Calu3 (cell line): ENCODE measurements at regions of chr12 and their contacts with region 1.

Region 1: DNA sequence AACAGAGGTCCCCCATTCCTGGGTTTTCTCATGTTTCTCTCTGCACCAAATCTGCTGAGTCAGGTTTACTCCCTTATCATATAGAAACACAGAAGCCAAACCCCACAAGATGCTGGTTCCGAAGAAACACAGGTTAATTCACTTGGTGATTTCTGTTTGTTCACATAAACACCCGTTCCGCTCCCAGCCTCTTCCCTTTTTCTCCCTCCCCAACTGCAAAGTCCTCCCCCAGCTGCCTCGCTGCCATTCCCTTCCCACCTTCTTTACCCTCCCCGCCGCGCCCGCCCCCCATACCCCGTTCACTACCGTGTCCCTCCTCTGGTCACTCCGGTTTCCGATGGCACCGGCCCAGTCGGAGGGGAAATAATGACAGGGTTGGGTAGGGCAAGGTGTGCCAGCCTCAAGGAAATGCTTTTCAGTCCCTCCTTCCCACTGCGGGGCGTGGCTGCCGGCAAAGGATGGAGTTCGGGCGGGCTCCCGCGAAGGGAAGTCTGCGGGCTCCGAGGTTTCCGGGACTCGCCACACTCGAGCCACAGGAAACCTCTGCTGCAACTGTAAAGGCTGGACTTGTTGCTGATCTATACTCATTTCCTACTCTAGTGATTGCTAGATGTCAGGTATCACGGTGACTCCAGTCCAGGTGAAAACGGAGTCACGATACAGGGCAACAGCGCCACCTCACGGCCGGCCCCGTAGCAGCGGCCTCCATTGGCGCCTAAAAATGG is at the start of gene STYK1:
- DNase-seq: peak; percentile 91
- H3K4me3 Mint-ChIP-seq: peak within 1 kb of the TSS; percentile 81
- H3K27ac Mint-ChIP-seq: peak within 1 kb of the TSS; percentile 70
- H3K4me1 Mint-ChIP-seq: peaks cover 35% of the 10 kb centered on the region
- H3K27me3 Mint-ChIP-seq: no peaks in the 10 kb centered on the region
- CTCF ChIP-seq: peak; percentile 93
- total RNA-seq, gene STYK1: 8.4 and 10.7 TPM in 2 replicates

Region 2: DNA sequence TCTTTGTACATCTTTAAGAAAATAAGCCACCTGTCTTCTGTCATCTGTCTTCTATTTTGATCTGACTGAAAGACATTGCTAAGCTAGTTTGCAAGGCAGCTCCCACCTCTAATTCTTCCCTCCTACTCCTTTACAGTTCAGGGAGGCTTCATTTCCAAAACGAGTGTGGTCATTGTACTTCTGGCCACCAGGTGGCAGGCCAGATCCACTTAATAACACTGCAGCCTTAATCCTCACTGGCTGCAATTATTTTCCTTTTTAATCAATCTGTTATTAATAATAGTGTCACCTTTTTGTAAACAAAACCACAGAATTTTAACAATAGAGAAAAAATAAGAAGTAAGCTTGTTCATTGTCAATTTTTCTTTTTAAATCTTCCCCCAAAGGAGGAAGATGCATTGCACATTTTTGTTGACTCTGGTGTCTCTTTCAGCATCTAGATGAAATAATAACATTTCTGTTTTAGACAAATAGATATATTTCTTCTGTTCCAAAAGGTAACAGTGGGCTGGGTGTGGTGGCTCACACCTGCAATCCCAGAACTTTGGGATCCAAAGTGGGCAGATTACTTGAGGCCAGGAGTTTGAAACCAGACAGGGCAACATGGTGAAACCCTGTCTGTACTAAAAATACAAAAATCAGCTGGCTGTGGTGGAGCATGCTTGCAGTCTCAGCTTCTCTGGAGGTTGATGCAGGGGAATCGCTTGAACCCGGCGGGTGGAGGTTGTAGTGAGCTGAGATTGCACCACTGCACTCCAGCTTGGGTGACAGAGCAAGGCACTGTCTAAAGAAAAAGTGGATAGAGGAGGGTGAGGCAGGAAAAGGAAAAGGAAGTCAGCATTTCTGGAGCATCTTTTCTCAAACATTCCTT is 437.8 kb before region 1 on chr12:
- CTCF ChIA-PET with region 1: no interaction called
- intact Hi-C with region 1: loop called (anchors 10 kb)
- DNase-seq: peak; percentile 40
- H3K4me3 Mint-ChIP-seq: no peak overlapping the region
- H3K27ac Mint-ChIP-seq: no peak overlapping the region
- H3K4me1 Mint-ChIP-seq: no peaks in the 10 kb centered on the region
- H3K27me3 Mint-ChIP-seq: no peaks in the 10 kb centered on the region
- CTCF ChIP-seq: peak; percentile 82

Region 3: GRCh38 chr12:10562306-10562933 is 111.4 kb before region 1 on chr12:
- CTCF ChIA-PET with region 1: no interaction called
- intact Hi-C with region 1: loop called (anchors 5 kb)
- DNase-seq: peak; percentile 45
- H3K4me3 Mint-ChIP-seq: no peak overlapping the region
- H3K27ac Mint-ChIP-seq: no peak overlapping the region
- H3K4me1 Mint-ChIP-seq: no peaks in the 10 kb centered on the region
- H3K27me3 Mint-ChIP-seq: no peaks in the 10 kb centered on the region
- CTCF ChIP-seq: peak; percentile 63

Region 4: GRCh38 chr12:10613349-10614055 is 60.3 kb before region 1 on chr12 and contains the start of gene MAGOHB:
- CTCF ChIA-PET with region 1: no interaction called
- intact Hi-C with region 1: loop called (anchors 1 kb)
- DNase-seq: peak; percentile 98
- H3K4me3 Mint-ChIP-seq: peak within 1 kb of the TSS; percentile 93
- H3K27ac Mint-ChIP-seq: peak within 1 kb of the TSS; percentile 100
- H3K4me1 Mint-ChIP-seq: peaks cover 21% of the 10 kb centered on the region
- H3K27me3 Mint-ChIP-seq: no peaks in the 10 kb centered on the region
- CTCF ChIP-seq: no peak
- total RNA-seq, gene MAGOHB: 59.5 and 61.4 TPM in 2 replicates

Region 5: GRCh38 chr12:10739157-10740118 is 65.6 kb after region 1 on chr12:
- CTCF ChIA-PET with region 1: no interaction called
- intact Hi-C with region 1: no loop called
- DNase-seq: no peak
- H3K4me3 Mint-ChIP-seq: peak overlapping the region; percentile 9
- H3K27ac Mint-ChIP-seq: peak overlapping the region; percentile 90
- H3K4me1 Mint-ChIP-seq: peaks cover 65% of the 10 kb centered on the region
- H3K27me3 Mint-ChIP-seq: no peaks in the 10 kb centered on the region
- CTCF ChIP-seq: no peak

Region 6: DNA sequence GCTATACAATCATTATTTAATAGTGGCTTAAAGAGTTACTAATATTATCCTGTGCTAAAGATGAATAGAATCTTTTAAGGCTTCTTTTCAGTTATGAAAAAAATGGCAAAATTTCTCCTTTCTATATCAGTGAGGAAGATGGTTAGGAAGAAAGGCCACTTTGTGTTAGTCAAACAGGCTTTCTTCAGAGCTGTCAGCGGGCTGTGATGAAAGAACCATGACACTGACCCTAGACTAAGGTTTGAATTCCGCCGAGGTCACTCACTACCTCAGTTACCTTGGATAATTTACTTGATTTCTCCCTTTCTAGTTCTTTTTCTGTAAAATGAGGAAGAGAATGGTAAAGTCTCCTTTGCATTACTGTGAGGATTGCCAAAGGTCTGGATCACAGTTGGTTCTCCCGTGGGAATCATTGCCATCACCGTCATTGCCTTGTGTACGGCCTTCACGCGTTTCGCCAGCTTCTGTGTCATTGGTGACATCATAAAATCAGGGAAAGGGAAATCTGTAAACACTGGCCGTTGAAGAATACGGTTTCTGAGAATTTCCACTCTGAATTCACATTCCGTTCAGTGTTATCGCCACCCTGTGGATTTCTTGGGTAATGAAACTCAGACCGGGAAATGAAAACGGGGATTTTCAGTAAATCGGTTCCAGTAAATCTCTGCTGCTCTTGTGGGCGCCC is 76.0 kb after region 1 on chr12:
- CTCF ChIA-PET with region 1: interaction called, 3 read pairs
- intact Hi-C with region 1: loop called (anchors 2 kb)
- DNase-seq: peak; percentile 81
- H3K4me3 Mint-ChIP-seq: peak overlapping the region; percentile 57
- H3K27ac Mint-ChIP-seq: no peak overlapping the region
- H3K4me1 Mint-ChIP-seq: peaks cover 27% of the 10 kb centered on the region
- H3K27me3 Mint-ChIP-seq: no peaks in the 10 kb centered on the region
- CTCF ChIP-seq: peak; percentile 79